Activated CD4-positive, alpha-beta T cell treated with anti-CD3 and anti-CD28 coated beads for 36 hours (primary cell): ENCODE measurements at regions of chr17 and their contacts with region 1.

Region 1: DNA sequence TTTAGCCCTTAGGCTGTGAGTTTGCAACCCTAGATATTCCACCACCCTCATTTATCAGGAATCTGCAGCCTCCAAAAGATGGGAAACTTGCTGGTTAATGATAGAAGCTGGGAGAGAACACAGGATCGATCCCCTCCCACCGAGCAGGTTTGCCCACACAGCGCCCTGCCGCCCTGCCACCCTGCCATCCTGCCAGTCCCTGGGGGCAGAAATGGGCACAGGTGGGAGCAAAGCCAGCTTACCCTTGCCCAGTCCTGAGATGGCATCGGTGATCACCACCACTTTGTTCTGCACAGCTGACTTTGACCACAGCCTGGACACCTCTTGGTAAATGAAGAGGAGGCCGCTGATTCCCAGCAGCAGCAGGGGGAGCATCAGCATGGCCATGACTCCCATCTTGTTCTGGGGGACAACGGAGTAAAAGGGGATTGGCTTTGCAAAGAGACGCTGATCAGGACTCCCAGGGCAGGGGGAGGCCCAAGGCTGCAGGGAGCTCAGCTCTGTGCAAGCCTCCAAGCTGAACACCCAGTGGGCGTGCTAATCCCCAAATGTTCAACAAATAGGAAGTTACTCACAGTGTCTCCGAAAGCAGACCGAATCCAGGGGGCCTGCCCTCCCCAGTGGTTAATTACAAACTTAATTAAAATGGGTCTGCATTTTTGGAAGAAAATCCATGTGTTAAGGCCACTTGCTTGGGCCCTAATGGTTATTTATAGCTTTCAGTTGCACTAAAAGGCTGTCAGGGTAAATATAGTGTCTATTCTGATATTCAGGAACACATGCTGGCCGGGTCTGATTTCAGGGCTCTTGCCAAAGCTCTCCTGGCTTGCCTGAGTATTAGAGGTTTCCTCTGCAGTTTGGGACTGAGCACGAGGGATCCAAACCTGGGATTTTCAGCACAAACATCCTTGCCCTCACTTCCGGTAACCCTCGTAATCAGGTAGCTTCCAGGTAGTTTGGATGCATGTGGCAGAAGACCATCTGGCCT is at the start of gene DHRS7C:
- DNase-seq: no peak
- ATAC-seq: no peak
- H3K4me3 Mint-ChIP-seq: no peak within 1 kb of the TSS
- H3K27ac Mint-ChIP-seq: no peak within 1 kb of the TSS
- H3K4me1 Mint-ChIP-seq: no peaks in the 10 kb centered on the region
- H3K27me3 Mint-ChIP-seq: peaks cover 4% of the 10 kb centered on the region
- total RNA-seq, gene DHRS7C: not detected

Region 2: GRCh38 chr17:9714801-9715200 is 76.4 kb before region 1 on chr17:
- CTCF ChIA-PET with region 1: no interaction called
- POLR2A ChIA-PET with region 1: no interaction called
- intact Hi-C with region 1: loop called in 1 of 2 experiments (anchors 10 kb)
- DNase-seq: no peak
- ATAC-seq: no peak
- H3K4me3 Mint-ChIP-seq: no peak overlapping the region
- H3K27ac Mint-ChIP-seq: no peak overlapping the region
- H3K4me1 Mint-ChIP-seq: no peaks in the 10 kb centered on the region
- H3K27me3 Mint-ChIP-seq: peaks cover 5% of the 10 kb centered on the region

Region 3: GRCh38 chr17:10210151-10210930 is 419.2 kb after region 1 on chr17:
- CTCF ChIA-PET with region 1: no interaction called
- POLR2A ChIA-PET with region 1: no interaction called
- intact Hi-C with region 1: no loop called
- DNase-seq: no peak
- ATAC-seq: no peak
- H3K4me3 Mint-ChIP-seq: no peak overlapping the region
- H3K27ac Mint-ChIP-seq: no peak overlapping the region
- H3K4me1 Mint-ChIP-seq: peaks cover 3% of the 10 kb centered on the region
- H3K27me3 Mint-ChIP-seq: no peaks in the 10 kb centered on the region